Heart left ventricle (tissue), 16 donors: ENCODE measurements at regions of chr7 and their contacts with region 1.

Region 1: GRCh38 chr7:137204246-137204645 is 139.3 kb downstream of the PTN start:
- DNase-seq: no peak
- ATAC-seq: no peak
- H3K4me3 ChIP-seq: no peak overlapping the region
- H3K27ac ChIP-seq: no peak overlapping the region
- H3K4me1 ChIP-seq: peaks cover 0 to 3% (median 0%) of the 10 kb centered on the region in 12 donors
- H3K27me3 ChIP-seq: no peaks in the 10 kb centered on the region
- CTCF ChIP-seq: no peak
- POLR2A ChIP-seq: no peak

Region 2: GRCh38 chr7:137221467-137221866 is 17.2 kb after region 1 on chr7:
- intact Hi-C with region 1: loop called in 1 of 10 experiments (anchors 2 kb)
- DNase-seq: no peak
- ATAC-seq: no peak
- H3K4me3 ChIP-seq: no peak overlapping the region
- H3K27ac ChIP-seq: no peak overlapping the region
- H3K4me1 ChIP-seq: no peaks in the 10 kb centered on the region
- H3K27me3 ChIP-seq: no peaks in the 10 kb centered on the region
- CTCF ChIP-seq: no peak
- POLR2A ChIP-seq: no peak